ENCODE measurements at regions of chr17 and their contacts with region 1.

Region 1: GRCh38 chr17:11240041-11240801 is 792 bp upstream of the SHISA6 start:
- DNase-seq: no peak

Region 2: DNA sequence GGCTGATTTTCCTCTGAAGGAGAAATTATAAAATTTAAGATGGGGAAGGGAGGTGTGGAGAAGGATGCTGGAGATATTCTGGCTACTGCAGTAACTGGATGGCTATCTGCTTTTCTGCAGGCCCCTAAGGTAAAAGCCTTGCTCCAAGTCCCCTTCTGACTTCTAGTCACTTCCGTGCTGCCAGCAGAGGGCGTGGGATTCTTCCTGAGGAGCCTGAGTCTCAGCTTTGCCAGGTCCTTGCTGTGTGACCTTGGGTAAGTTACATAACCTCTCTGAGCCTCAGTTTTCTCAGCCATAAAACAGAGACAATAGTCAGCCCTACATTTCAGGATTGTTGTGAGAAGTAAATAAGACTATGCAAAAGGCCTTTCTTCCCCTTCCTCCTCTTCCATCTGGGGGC is 486.1 kb before region 1 on chr17:
- intact Hi-C with region 1: no loop called
- DNase-seq: no peak

Region 3: GRCh38 chr17:11178581-11178980 is 61.6 kb before region 1 on chr17:
- intact Hi-C with region 1: no loop called
- DNase-seq: no peak

Region 4: GRCh38 chr17:11309850-11310249 is 69.6 kb after region 1 on chr17:
- intact Hi-C with region 1: loop called in 1 of 2 experiments (anchors 2 kb)
- DNase-seq: no peak